PC-3 (cell line): ENCODE measurements at regions of chr15 and their contacts with region 1.

Region 1: GRCh38 chr15:44066316-44066740 is 128.7 kb downstream of the FRMD5 start:
- DNase-seq: peak; percentile 86
- ATAC-seq: peak; percentile 62
- H3K4me3 ChIP-seq: peak overlapping the region; percentile 7; the same call in 1 of the 2 replicates
- H3K27ac ChIP-seq: no peak overlapping the region
- H3K4me1 ChIP-seq: peaks cover 14% of the 10 kb centered on the region; the same call in 1 of the 2 replicates
- H3K27me3 ChIP-seq: no peaks in the 10 kb centered on the region
- CTCF ChIP-seq: peak; percentile 98

Region 2: DNA sequence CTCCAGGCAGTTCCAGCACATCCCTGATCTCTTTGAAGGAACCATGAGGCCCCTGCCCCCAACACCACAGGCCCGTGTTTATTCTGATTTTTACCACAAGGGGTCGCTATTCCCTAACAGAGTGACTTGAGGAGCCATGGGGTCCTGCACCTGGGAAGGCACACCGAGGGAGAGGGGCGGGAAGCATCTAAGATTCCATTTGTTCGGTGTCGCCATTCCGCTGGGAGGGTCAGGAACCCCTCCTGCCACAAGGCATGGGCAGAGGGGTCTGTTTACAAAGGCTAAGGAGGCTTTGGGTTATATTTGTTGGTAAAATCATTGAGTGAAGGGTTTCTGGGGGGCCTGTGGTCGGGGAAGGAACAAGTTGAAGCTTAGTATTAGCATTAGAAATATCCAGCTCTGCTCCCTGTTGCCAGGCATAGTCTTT is 162.5 kb before region 1 on chr15:
- CTCF ChIA-PET with region 1: no interaction called
- POLR2A ChIA-PET with region 1: no interaction called
- intact Hi-C with region 1: loop called (anchors 2 kb)
- DNase-seq: peak; percentile 90
- ATAC-seq: peak; percentile 90
- H3K4me3 ChIP-seq: no peak overlapping the region
- H3K27ac ChIP-seq: no peak overlapping the region
- H3K4me1 ChIP-seq: peaks cover 11% of the 10 kb centered on the region
- H3K27me3 ChIP-seq: no peaks in the 10 kb centered on the region
- CTCF ChIP-seq: peak; percentile 96

Region 3: DNA sequence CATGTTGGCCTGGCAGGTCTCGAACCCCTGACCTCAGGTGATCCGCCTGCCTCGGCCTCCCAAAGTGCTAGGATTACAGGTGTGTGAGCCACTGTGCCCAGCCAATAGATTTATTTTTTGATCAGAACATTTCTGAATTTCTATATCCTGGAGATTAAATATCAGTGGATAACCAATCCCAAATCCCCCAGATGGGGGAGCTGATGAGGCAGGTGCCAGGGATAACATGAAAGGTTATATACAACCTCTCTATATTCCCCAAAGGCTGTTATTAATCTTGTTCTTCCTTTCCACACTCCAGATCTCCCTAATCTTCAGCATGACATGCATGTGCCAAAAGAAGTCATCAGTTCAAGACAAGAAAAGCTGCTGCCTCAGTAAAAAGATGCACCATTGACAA is 127.3 kb before region 1 on chr15:
- CTCF ChIA-PET with region 1: interaction called, 3 read pairs
- POLR2A ChIA-PET with region 1: no interaction called
- intact Hi-C with region 1: loop called (anchors 1 kb)
- DNase-seq: peak; percentile 75
- ATAC-seq: peak; percentile 86
- H3K4me3 ChIP-seq: no peak overlapping the region
- H3K27ac ChIP-seq: no peak overlapping the region
- H3K4me1 ChIP-seq: no peaks in the 10 kb centered on the region
- H3K27me3 ChIP-seq: no peaks in the 10 kb centered on the region
- CTCF ChIP-seq: peak; percentile 78

Region 4: DNA sequence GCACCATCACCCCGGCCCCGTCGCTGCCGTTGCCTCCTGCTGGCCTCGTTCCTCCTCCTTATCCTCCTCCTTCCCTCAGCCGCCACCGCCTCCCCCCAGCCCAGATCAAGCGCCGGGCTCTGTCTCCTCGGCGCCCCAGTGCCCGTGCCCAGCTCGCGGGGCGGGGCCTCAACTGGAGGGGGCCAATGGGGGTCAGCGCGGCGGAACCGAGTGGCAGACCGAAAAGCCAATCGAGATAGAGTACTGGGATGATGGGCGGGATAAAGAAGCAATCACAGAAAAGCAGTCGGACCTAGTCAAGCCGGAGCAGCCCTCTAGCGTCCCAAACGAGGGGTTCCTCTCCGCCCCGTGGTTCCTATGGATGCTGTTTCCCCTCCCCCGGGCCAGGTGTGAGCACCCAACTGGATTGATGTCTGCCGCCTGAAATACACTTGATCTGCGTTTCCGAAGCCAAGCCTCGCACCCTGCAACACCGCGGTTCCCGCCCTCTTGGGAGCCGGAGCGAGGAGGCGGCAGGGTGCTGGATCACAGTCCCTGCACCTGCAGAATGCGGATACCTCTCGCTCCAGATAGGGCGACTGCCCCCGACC is 128.9 kb after region 1 on chr15 and contains the start of gene FRMD5:
- CTCF ChIA-PET with region 1: no interaction called
- POLR2A ChIA-PET with region 1: no interaction called
- intact Hi-C with region 1: loop called (anchors 1 kb)
- DNase-seq: peak; percentile 98
- ATAC-seq: peak; percentile 84
- H3K4me3 ChIP-seq: peak within 1 kb of the TSS; percentile 81
- H3K27ac ChIP-seq: peak within 1 kb of the TSS; percentile 51
- H3K4me1 ChIP-seq: peaks cover 30% of the 10 kb centered on the region
- H3K27me3 ChIP-seq: no peaks in the 10 kb centered on the region
- CTCF ChIP-seq: peak; percentile 37; the same call in 1 of the 2 replicates
- total RNA-seq, gene FRMD5: 8.7 and 12.2 TPM in 2 replicates